MCF 10A (cell line): ENCODE measurements at regions of chr7 and their contacts with region 1.

Region 1: DNA sequence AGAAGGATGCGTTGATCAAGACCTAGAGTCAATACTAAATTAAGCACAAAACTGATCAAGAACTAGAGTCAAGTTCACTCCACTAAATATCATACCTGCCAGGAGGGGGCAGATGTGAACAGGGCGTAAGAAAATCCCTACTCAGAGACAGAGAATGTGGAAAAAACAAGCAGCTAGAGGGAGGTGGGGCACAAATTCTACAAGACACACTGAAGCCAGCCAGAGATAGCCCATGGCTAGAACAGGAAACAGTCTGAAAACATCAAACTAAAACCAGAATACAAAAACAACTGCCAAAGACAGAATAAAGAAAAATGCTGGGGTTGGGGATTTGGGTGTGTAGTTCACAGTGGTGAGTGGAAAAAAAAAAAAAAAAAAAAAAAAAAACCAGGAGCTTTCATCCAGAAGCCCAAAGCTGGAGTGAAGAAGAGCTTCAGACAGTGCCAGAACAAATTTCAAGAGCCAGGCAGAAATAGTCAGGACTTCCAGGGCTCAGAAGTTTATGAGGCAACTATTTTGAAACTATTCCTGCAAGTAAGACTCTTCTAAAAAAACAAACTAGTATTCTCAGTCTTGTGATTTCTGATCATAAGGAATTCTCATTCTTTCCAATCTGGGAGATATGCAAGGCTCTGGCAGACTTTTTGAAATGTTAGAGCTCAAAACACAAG is 118.3 kb downstream of the CCDC71L start:
- DNase-seq: peak; percentile 88
- H3K4me3 Mint-ChIP-seq: no peak overlapping the region
- H3K27ac Mint-ChIP-seq: peak overlapping the region; percentile 59
- H3K4me1 Mint-ChIP-seq: peaks cover 6% of the 10 kb centered on the region
- H3K27me3 Mint-ChIP-seq: no peaks in the 10 kb centered on the region
- CTCF ChIP-seq: peak; percentile 63

Region 2: GRCh38 chr7:105602325-105603305 is 940.1 kb before region 1 on chr7:
- CTCF ChIA-PET with region 1: no interaction called
- POLR2A ChIA-PET with region 1: no interaction called
- intact Hi-C with region 1: no loop called
- DNase-seq: no peak
- H3K4me3 Mint-ChIP-seq: no peak overlapping the region
- H3K27ac Mint-ChIP-seq: no peak overlapping the region
- H3K4me1 Mint-ChIP-seq: peaks cover 6% of the 10 kb centered on the region
- H3K27me3 Mint-ChIP-seq: no peaks in the 10 kb centered on the region
- CTCF ChIP-seq: no peak

Region 3: GRCh38 chr7:106466867-106467266 is 75.8 kb before region 1 on chr7:
- CTCF ChIA-PET with region 1: no interaction called
- POLR2A ChIA-PET with region 1: no interaction called
- intact Hi-C with region 1: no loop called
- DNase-seq: no peak
- H3K4me3 Mint-ChIP-seq: no peak overlapping the region
- H3K27ac Mint-ChIP-seq: no peak overlapping the region
- H3K4me1 Mint-ChIP-seq: no peaks in the 10 kb centered on the region
- H3K27me3 Mint-ChIP-seq: no peaks in the 10 kb centered on the region
- CTCF ChIP-seq: no peak

Region 4: DNA sequence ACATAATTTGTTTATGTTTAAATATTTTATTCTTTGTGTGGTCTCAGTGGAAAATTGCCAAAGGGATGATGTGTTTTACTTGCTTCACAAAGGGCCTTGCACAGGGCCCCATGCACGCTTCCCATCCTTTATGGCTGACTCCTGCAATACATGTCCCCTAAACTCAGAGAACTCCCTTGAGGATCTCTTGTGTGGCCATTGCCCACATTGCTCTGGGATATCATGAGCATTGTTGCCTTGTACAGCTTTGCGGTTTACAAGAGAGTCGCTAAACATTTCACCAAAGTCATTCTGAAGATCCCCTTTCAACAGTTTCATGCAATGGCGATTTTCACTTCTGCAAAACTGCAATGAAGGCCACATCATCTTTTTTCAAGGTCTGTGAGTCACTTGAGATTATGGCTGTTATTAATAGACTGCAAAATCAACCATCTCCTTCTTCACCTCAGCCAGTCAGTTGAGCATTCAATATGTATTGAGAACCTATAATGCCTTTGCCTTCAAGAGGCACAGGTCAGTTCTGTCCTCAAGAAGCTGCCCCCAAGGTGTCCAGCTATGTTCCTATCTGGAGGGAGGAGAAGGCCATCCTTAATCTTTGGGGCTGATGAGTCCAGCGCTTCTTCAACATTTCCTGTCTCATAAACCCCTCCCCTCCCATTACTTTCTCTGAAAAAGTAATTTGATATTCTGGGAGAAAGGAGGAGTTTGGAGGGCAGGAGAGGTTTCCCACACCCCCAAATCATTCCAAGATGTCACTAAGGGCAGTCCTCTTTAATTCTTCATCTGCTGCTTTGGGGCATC is 10.2 kb after region 1 on chr7:
- CTCF ChIA-PET with region 1: interaction called, 12 read pairs
- POLR2A ChIA-PET with region 1: no interaction called
- intact Hi-C with region 1: no loop called
- DNase-seq: no peak
- H3K4me3 Mint-ChIP-seq: no peak overlapping the region
- H3K27ac Mint-ChIP-seq: no peak overlapping the region
- H3K4me1 Mint-ChIP-seq: no peaks in the 10 kb centered on the region
- H3K27me3 Mint-ChIP-seq: no peaks in the 10 kb centered on the region
- CTCF ChIP-seq: no peak

Region 5: DNA sequence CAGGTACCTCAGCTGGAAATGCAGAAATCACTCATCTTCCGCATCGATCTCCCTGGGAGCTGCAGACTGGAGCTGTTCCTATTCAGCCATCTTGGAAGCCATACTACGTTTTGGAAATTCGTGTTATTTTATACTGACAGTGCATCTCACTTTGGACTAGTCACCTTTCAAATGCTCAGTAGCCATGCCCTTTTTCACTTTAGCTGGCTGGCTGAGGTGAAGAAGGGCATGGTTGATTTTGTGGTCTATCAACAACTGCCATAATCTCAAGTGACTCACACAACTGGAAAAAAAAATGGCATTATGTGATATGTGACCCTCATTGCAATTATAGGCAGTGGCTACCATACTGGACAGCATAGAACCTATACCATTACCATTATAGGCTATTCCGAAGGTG is 17.8 kb after region 1 on chr7:
- CTCF ChIA-PET with region 1: interaction called, 11 read pairs
- POLR2A ChIA-PET with region 1: no interaction called
- intact Hi-C with region 1: no loop called
- DNase-seq: no peak
- H3K4me3 Mint-ChIP-seq: no peak overlapping the region
- H3K27ac Mint-ChIP-seq: no peak overlapping the region
- H3K4me1 Mint-ChIP-seq: peaks cover 7% of the 10 kb centered on the region
- H3K27me3 Mint-ChIP-seq: no peaks in the 10 kb centered on the region
- CTCF ChIP-seq: no peak

Region 6: DNA sequence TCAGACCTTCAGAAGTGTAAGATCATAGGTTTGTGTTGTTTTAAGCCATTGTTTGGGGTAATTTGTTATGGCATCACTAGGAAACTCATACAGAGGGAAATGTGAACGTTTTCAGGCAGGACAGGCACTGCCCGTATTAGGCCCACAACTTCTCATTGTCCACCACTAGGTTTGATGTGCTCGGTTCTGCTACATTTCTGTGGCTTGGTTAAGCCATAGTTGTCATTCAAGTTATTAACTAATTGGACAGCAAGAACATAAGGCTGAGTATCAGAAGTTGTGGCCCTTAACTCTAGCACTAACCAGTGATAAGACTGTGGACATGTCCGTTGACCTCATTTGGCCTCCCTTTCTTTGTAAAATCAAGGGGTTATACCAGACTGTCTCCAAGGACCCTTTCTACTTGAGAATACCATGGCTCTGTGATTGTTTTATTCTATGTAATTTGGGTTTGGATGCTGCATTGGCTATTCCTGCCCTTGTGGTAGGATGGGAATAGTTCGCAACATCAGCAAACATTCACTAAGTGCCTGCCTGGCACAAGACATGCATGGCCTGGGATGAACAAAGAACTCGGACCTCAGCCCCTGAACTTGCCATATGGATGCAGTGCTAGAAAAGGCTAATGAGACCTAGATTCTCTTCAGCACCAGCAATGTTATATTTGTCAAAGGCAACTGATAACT is 32.6 kb after region 1 on chr7:
- CTCF ChIA-PET with region 1: no interaction called
- POLR2A ChIA-PET with region 1: no interaction called
- intact Hi-C with region 1: no loop called
- DNase-seq: no peak
- H3K4me3 Mint-ChIP-seq: no peak overlapping the region
- H3K27ac Mint-ChIP-seq: no peak overlapping the region
- H3K4me1 Mint-ChIP-seq: no peaks in the 10 kb centered on the region
- H3K27me3 Mint-ChIP-seq: no peaks in the 10 kb centered on the region
- CTCF ChIP-seq: no peak

Region 7: GRCh38 chr7:106644999-106645398 is 102.3 kb after region 1 on chr7:
- CTCF ChIA-PET with region 1: interaction called, 14 read pairs
- POLR2A ChIA-PET with region 1: no interaction called
- intact Hi-C with region 1: no loop called
- DNase-seq: no peak
- H3K4me3 Mint-ChIP-seq: no peak overlapping the region
- H3K27ac Mint-ChIP-seq: no peak overlapping the region
- H3K4me1 Mint-ChIP-seq: peaks cover 8% of the 10 kb centered on the region
- H3K27me3 Mint-ChIP-seq: no peaks in the 10 kb centered on the region
- CTCF ChIP-seq: no peak

Region 8: DNA sequence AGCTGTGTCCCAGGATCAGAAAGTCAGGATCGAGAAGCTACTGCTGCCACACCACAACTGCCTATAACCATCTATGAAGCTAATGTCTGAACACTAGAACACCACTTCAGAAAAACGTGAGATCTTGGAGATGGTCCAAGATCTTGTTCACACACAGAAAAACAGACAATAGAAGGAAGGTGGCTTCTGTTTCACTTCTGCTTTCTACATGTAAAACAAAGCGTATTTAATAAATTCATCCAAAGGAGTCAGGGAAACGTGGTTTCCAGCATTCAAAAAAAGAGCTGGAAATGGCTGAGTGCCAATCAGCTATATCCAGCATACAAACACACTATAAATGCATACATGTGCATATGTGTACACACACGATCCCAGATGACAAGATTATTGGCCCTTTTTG is 188.5 kb after region 1 on chr7:
- CTCF ChIA-PET with region 1: interaction called, 116 read pairs
- POLR2A ChIA-PET with region 1: interaction called, 8 read pairs
- intact Hi-C with region 1: loop called (anchors 1 kb)
- DNase-seq: no peak
- H3K4me3 Mint-ChIP-seq: no peak overlapping the region
- H3K27ac Mint-ChIP-seq: no peak overlapping the region
- H3K4me1 Mint-ChIP-seq: peaks cover under 1% of the 10 kb centered on the region
- H3K27me3 Mint-ChIP-seq: no peaks in the 10 kb centered on the region
- CTCF ChIP-seq: no peak

Region 9: DNA sequence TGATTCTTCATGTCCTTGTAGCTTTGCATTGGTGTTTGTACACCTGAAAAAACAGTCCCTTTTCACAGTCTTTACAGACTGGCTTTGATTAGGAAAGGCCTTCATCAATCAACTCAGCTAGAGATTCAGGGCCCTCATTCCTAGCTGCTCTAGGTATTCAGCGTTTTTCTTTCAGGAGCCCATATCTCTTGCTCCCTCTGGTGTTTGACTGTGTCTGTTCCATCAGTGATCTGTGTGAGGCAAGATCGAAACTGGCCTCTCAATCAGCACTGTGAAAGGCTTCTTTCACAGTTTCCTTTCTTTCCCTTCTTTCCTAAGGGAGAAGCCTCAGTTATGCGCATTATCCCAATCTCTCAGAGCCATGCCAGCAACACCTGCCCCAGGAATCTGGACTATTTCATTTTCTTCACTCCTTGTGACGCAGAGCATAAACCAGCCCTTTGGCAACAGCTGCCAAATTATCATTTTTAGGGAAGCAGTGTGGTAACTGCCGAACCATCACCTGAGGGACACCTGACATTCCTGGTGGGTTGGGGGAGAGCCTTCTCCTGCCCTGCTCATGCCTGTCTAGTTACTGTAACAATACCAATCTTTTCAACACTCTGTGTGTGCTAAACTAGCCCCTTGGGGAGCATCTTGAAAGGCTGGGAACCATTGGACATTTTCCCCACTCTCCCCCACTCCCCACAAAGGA is 194.0 kb after region 1 on chr7:
- CTCF ChIA-PET with region 1: interaction called, 116 read pairs
- POLR2A ChIA-PET with region 1: interaction called, 8 read pairs
- intact Hi-C with region 1: loop called (anchors 1 kb)
- DNase-seq: peak; percentile 84
- H3K4me3 Mint-ChIP-seq: peak overlapping the region; percentile 57
- H3K27ac Mint-ChIP-seq: peak overlapping the region; percentile 86
- H3K4me1 Mint-ChIP-seq: peaks cover 9% of the 10 kb centered on the region
- H3K27me3 Mint-ChIP-seq: no peaks in the 10 kb centered on the region
- CTCF ChIP-seq: peak; percentile 72

Region 10: DNA sequence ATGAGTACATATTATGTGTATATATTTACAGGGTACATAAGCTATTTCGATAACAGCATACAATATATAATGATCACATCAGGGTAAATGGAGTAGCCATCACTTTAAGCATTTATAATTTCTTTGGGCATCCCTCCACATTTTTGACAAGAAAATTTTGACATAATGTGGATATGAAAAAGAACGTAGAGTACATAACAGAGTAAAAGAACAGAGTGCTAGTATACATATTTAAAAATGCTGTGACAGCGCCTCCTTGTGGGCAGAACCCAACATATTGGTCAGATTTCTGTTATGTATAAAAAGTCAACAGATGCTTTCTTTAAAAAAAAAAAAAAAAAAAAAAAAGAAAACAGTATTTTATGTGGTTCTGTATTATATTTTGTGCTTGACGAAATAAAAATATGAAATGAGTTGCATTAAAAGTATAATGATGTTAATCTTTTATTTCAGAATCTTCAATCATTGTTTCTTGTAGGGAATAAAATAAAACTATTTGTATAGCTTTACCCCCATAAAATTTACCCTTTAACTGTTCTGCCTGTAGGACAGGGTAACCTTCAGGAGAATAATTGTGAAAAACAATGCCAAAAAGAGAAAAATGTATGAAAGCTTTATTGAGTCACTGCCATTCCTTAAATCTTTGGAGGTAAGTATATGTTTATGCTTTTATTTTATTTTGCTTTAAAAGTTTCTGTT is 607.8 kb after region 1 on chr7:
- CTCF ChIA-PET with region 1: no interaction called
- POLR2A ChIA-PET with region 1: no interaction called
- intact Hi-C with region 1: loop called (anchors 5 kb)
- DNase-seq: peak; percentile 71
- H3K4me3 Mint-ChIP-seq: no peak overlapping the region
- H3K27ac Mint-ChIP-seq: no peak overlapping the region
- H3K4me1 Mint-ChIP-seq: peaks cover 12% of the 10 kb centered on the region
- H3K27me3 Mint-ChIP-seq: no peaks in the 10 kb centered on the region
- CTCF ChIP-seq: peak; percentile 59